Stomach (tissue), 19 donors: ENCODE measurements at regions of chr3 and their contacts with region 1.

Region 1: GRCh38 chr3:140898340-140899180 is 43.1 kb upstream of the SLC25A36 start:
- DNase-seq: peak in 1 of 2 donors; percentile 78
- H3K4me3 ChIP-seq: no peak overlapping the region
- H3K27ac ChIP-seq: no peak overlapping the region
- H3K4me1 ChIP-seq: peaks cover 0 to 9% (median 6%) of the 10 kb centered on the region in 4 donors
- H3K27me3 ChIP-seq: no peaks in the 10 kb centered on the region
- CTCF ChIP-seq: peak in 5 of 7 experiments; percentile 34 to 84 (median 62)
- EP300 ChIP-seq: no peak
- POLR2A ChIP-seq: no peak

Region 2: GRCh38 chr3:140664115-140664514 is 234.4 kb before region 1 on chr3:
- intact Hi-C with region 1: no loop called
- DNase-seq: no peak
- H3K4me3 ChIP-seq: no peak overlapping the region
- H3K27ac ChIP-seq: no peak overlapping the region
- H3K4me1 ChIP-seq: no peaks in the 10 kb centered on the region
- H3K27me3 ChIP-seq: no peaks in the 10 kb centered on the region
- CTCF ChIP-seq: no peak
- EP300 ChIP-seq: no peak
- POLR2A ChIP-seq: no peak

Region 3: DNA sequence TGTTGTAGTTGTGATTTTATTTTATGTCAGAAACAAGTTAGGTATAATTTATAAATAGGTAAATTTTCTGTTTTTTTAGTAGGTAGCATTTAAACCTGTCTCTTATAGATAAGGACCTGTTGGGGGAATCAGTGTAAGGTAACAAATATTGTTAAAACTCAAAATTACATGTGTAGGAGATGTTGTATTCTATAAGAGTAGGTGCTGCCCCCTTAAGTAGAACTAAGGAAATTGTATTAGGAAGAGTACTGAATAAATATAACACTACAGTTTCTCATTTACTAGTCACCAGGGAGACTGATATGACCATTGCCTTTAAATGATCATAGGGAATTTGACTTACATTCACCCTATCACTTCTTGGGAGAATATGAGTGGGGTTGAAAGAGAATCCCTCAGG is 74.3 kb after region 1 on chr3:
- intact Hi-C with region 1: loop called (anchors 5 kb)
- DNase-seq: peak in 1 of 2 donors; percentile 23
- H3K4me3 ChIP-seq: no peak overlapping the region
- H3K27ac ChIP-seq: no peak overlapping the region
- H3K4me1 ChIP-seq: no peaks in the 10 kb centered on the region
- H3K27me3 ChIP-seq: no peaks in the 10 kb centered on the region
- CTCF ChIP-seq: peak in 2 of 7 experiments; percentile 24 to 30
- EP300 ChIP-seq: no peak
- POLR2A ChIP-seq: no peak

Region 4: DNA sequence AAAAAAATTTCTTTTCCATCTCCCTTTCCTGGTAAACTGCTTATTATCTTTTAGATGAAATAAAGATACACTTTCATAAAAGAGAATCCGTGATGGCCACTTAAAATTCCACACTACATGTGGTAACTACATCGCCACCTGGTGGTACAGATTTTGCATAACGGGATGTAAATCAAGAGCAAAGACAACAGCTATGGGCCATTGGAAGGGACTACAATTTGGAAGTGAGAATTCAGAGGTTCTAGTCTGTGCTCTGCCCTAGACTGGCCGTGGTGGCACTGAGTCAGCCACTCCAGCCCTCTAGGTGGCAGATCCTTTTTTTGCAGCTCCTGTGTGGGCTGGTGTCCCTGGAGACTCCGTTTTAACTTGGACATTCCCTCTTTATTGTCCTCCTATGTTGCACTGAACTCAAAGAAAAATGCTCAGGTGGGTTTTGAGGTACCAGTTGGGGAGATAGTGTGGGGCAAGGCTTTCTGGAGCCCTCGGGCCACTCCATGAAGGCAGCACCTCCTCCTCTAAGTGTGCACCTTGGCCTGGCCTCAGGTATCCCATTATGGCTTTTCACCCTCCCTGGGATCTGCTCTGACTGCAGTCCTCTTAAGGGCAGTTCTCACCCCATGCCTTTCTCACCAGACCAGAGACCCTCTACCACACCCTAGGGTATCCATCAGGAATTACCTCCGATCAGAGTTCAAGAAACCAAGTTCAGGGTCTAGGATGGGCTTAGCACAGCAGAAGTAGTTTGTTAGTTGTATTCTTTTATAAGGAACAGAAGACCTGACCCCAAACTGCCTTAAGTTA is 207.5 kb after region 1 on chr3:
- intact Hi-C with region 1: loop called (anchors 5 kb)
- DNase-seq: peak; percentile 79 to 94
- H3K4me3 ChIP-seq: no peak overlapping the region
- H3K27ac ChIP-seq: no peak overlapping the region
- H3K4me1 ChIP-seq: no peaks in the 10 kb centered on the region
- H3K27me3 ChIP-seq: no peaks in the 10 kb centered on the region
- CTCF ChIP-seq: peak in 5 of 7 experiments; percentile 51 to 76 (median 63)
- EP300 ChIP-seq: no peak
- POLR2A ChIP-seq: no peak

Region 5: DNA sequence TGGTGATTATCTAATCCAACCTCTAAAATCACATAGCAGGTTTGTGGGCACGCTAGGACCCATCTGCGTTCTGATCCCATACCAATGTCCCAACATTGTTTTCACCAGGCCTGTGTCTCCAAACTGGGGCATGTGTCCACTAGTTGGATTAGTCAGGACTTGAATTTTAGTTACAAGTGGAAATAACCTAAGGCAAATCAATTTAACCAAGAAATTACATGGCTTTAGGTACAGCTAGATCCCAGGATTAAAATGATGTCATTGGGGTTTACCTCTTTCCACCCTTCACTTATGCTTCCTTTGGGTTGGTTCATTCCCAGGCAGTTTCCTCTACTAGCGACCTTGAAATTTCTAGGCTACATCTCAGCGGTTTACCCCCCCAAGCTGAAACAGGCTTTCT is 285.9 kb after region 1 on chr3:
- intact Hi-C with region 1: loop called (anchors 10 kb)
- DNase-seq: no peak
- H3K4me3 ChIP-seq: no peak overlapping the region
- H3K27ac ChIP-seq: no peak overlapping the region
- H3K4me1 ChIP-seq: no peaks in the 10 kb centered on the region
- H3K27me3 ChIP-seq: no peaks in the 10 kb centered on the region
- CTCF ChIP-seq: no peak
- EP300 ChIP-seq: no peak
- POLR2A ChIP-seq: no peak